ENCODE measurements at regions of chr16 and their contacts with region 1.

Region 1: DNA sequence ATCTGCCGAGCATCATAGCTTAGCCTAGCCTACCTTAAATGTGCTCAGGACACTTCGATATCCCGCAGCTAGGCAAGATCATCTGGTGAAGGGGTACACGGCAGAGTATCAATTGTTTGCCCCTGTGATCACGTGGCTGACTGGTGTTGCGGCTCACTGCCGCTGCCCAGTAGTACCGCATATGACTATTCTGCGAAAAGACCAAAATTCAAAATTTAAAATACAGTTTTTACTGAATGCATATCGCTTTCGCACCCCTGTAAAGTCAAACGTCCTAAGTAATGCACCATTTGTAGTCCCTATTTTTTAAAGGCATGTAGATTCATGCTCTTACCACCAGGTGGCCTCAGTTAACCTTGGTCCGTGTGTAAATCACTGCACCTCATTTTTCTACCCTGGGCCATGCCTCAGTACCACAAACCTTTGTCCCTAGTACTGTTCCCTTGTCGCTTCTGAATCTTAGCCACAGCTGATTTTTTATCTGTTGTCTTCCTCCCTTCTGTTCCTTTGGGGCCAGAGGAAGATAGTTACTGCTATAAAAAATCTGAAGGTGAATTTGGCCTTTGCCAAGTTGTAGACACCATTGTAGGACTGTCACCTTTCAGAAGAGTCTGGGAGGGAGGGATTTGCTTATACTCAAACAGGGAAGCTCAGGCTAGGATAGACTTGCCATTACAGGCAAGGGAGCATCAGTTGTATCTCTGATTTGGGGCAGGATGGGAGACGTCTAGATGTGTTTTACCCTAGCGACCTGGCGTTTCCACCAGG is 34.4 kb downstream of the WWP2 start:
- DNase-seq: no peak
- H3K4me3 ChIP-seq: no peak overlapping the region
- CTCF ChIP-seq: peak; percentile 69

Region 2: DNA sequence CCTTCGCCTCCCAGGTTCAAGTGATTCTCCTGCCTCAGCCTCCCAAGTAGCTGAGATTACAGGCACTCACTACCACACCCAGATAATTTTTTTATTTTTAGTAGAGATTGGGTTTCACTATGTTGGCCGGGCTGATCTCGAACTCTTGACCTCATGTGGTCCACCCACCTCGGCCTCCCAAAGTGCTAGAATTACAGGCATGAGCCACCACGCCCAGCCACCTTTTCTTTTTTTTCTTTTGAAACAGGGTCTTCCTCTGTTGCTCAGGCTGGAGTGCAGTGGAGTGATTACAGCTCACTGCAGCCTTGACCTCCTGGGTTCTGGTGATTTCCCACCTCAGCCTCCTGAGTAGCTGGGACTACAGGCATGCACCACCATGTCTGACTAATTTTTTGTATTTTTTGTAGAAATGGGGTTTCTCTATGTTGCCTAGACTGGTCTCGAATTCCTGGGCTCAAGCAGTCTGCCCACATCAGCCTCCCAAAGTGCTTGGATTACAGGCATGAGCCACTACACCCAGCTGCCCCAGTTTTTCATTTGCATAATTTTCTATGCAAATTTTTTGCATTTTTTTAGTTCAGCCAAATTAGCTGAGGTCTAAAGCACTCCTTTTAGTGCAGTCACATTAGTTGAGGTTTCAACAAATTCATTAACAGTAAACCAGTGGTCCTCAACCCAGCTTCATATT is 23.1 kb before region 1 on chr16:
- CTCF ChIA-PET with region 1: interaction called, 13 read pairs
- POLR2A ChIA-PET with region 1: no interaction called
- DNase-seq: no peak
- H3K4me3 ChIP-seq: no peak overlapping the region
- CTCF ChIP-seq: no peak

Region 3: DNA sequence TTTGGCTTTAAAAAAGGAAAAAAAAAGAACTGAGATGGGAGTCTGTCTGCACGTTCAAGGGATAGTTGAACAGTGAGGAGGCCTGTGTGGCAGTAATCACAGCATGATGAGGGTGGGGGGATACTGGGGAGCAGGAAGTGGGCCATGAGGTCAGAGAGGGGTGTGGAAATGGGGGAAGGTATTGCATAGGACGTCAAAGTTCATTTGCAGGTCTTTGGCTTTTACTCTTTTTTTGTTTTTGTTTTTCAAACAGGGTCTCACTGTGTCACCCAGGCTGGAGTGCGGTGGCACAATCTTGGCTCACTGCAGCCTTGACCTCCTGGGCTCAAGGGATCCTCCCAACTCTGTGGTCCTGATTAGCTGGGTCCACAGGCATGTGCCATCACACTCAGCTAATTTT is 15.4 kb before region 1 on chr16:
- CTCF ChIA-PET with region 1: interaction called, 46 read pairs
- POLR2A ChIA-PET with region 1: no interaction called
- DNase-seq: no peak
- H3K4me3 ChIP-seq: no peak overlapping the region
- CTCF ChIP-seq: no peak

Region 4: GRCh38 chr16:69812688-69813014 is 16.1 kb after region 1 on chr16:
- CTCF ChIA-PET with region 1: interaction called, 23 read pairs
- POLR2A ChIA-PET with region 1: no interaction called
- DNase-seq: no peak
- H3K4me3 ChIP-seq: no peak overlapping the region
- CTCF ChIP-seq: no peak

Region 5: GRCh38 chr16:69906838-69907401 is 110.4 kb after region 1 on chr16:
- CTCF ChIA-PET with region 1: interaction called, 13 read pairs
- POLR2A ChIA-PET with region 1: no interaction called
- DNase-seq: peak; percentile 59
- H3K4me3 ChIP-seq: no peak overlapping the region
- CTCF ChIP-seq: no peak

Measured in AG04449 (cell line).